B cell (primary cell): ENCODE measurements at regions of chr4 and their contacts with region 1.

Region 1: GRCh38 chr4:73308286-73308685 is 49.7 kb upstream of the ANKRD17 start:
- DNase-seq: peak; percentile 13
- ATAC-seq: no peak
- H3K4me3 ChIP-seq: no peak overlapping the region
- H3K4me3 Mint-ChIP-seq: no peak overlapping the region
- H3K27ac ChIP-seq: no peak overlapping the region
- H3K27ac Mint-ChIP-seq: no peak overlapping the region
- H3K4me1 ChIP-seq: no peaks in the 10 kb centered on the region
- H3K4me1 Mint-ChIP-seq: peaks cover 2% of the 10 kb centered on the region
- H3K27me3 ChIP-seq: no peaks in the 10 kb centered on the region
- H3K27me3 Mint-ChIP-seq: no peaks in the 10 kb centered on the region
- CTCF ChIP-seq: peak; percentile 44

Region 2: DNA sequence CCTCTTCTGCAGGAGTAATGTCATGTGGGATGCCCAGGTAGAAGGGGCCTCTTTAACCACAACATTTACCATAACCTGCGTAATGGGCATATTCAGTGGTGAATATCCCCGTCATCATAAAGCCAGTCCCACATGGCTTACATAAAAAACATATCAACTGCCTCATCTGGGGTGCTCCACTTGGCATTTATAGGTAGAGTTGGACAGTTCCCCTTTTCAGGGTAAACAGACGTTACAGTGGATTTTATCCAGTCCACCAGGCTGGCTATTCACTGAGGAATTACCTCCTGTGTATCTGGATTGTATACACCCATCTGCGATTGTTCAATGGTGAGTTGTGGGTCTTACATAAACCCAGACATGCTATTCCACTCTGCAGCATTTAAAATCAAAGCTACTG is 21.0 kb after region 1 on chr4:
- CTCF ChIA-PET with region 1: no interaction called
- POLR2A ChIA-PET with region 1: no interaction called
- intact Hi-C with region 1: no loop called
- DNase-seq: no peak
- ATAC-seq: no peak
- H3K4me3 ChIP-seq: no peak overlapping the region
- H3K4me3 Mint-ChIP-seq: no peak overlapping the region
- H3K27ac ChIP-seq: no peak overlapping the region
- H3K27ac Mint-ChIP-seq: no peak overlapping the region
- H3K4me1 ChIP-seq: no peaks in the 10 kb centered on the region
- H3K4me1 Mint-ChIP-seq: no peaks in the 10 kb centered on the region
- H3K27me3 ChIP-seq: no peaks in the 10 kb centered on the region
- H3K27me3 Mint-ChIP-seq: peaks cover 16% of the 10 kb centered on the region
- CTCF ChIP-seq: no peak

Region 3: DNA sequence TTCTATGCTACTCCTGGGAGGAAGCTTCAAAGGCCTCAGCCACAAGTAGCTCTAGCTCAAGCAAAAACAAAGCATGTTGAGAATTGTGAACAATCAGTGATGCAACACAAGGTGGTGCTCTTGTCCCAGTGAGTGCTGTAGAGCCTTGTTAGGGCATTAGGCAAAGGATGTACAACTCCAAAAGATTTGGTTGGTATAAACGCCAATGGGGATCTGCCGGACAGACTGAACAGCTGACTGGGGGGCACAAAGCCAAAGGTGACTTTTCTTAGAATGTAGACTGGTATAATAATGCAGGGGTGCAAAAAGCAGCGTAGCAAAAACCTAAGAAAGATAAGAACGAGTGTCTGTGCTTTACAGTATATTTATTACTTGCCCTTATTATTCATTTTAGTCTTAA is 33.2 kb after region 1 on chr4:
- CTCF ChIA-PET with region 1: no interaction called
- POLR2A ChIA-PET with region 1: no interaction called
- intact Hi-C with region 1: no loop called
- DNase-seq: peak; percentile 3
- ATAC-seq: no peak
- H3K4me3 ChIP-seq: no peak overlapping the region
- H3K4me3 Mint-ChIP-seq: no peak overlapping the region
- H3K27ac ChIP-seq: no peak overlapping the region
- H3K27ac Mint-ChIP-seq: no peak overlapping the region
- H3K4me1 ChIP-seq: no peaks in the 10 kb centered on the region
- H3K4me1 Mint-ChIP-seq: no peaks in the 10 kb centered on the region
- H3K27me3 ChIP-seq: no peaks in the 10 kb centered on the region
- H3K27me3 Mint-ChIP-seq: peaks cover 10% of the 10 kb centered on the region
- CTCF ChIP-seq: no peak

Region 4: DNA sequence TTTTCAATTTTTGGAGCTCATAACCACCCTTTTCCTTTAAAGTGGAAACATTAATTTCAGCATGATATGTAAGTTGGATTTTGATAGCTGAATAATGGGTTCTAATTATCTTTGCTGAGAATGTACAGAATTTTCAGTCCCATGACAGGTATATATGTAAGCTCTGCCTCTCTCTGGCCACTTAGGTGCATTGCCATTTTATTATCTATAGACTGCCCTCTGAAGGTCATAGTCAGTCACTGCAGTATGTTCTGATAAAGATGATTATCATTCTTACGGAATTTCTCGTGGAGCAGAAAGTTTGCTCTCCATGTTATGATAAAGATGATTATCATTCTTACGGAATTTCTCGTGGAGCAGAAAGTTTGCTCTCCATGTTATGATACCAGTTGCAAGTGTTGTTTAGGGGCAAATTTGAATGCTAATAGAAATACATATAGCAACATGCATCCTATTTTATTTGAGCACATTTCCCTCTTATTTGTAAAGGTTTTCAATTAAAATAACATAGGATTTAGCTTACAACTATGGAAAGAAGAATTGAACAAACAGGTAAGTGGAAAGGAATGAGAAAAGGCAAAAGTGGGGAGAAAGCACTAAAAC is 138.2 kb after region 1 on chr4:
- CTCF ChIA-PET with region 1: interaction called, 3 read pairs
- POLR2A ChIA-PET with region 1: no interaction called
- intact Hi-C with region 1: loop called (anchors 1 kb)
- DNase-seq: peak; percentile 41
- ATAC-seq: peak; percentile 83
- H3K4me3 ChIP-seq: no peak overlapping the region
- H3K4me3 Mint-ChIP-seq: no peak overlapping the region
- H3K27ac ChIP-seq: no peak overlapping the region
- H3K27ac Mint-ChIP-seq: no peak overlapping the region
- H3K4me1 ChIP-seq: no peaks in the 10 kb centered on the region
- H3K4me1 Mint-ChIP-seq: no peaks in the 10 kb centered on the region
- H3K27me3 ChIP-seq: peaks cover 0 to 4% (median 0%) of the 10 kb centered on the region in 4 experiments
- H3K27me3 Mint-ChIP-seq: peaks cover 25% of the 10 kb centered on the region
- CTCF ChIP-seq: peak; percentile 82

Region 5: DNA sequence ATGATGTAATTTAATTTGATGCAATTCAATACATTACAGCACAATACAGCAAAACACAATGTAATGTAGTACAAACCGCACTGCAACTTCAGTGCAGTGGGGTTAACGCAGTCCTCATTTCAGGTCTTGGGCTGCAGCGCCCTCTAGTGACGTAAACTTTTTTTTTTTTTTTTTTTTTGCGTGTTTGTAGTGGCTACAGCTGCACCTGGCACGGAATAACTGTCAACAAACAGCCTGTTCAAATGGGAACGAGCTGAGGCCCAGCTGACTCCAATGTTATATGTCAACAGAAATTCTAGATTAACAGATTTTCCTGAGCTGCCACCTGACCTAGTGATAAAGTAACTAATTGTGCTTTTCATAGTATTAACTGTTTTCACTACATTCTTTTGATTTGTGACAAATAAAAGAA is 345.4 kb after region 1 on chr4:
- CTCF ChIA-PET with region 1: interaction called, 5 read pairs
- POLR2A ChIA-PET with region 1: no interaction called
- intact Hi-C with region 1: loop called (anchors 1 kb)
- DNase-seq: peak; percentile 69
- ATAC-seq: peak; percentile 75
- H3K4me3 ChIP-seq: no peak overlapping the region
- H3K4me3 Mint-ChIP-seq: no peak overlapping the region
- H3K27ac ChIP-seq: no peak overlapping the region
- H3K27ac Mint-ChIP-seq: no peak overlapping the region
- H3K4me1 ChIP-seq: no peaks in the 10 kb centered on the region
- H3K4me1 Mint-ChIP-seq: peaks cover 2% of the 10 kb centered on the region
- H3K27me3 ChIP-seq: no peaks in the 10 kb centered on the region
- H3K27me3 Mint-ChIP-seq: no peaks in the 10 kb centered on the region
- CTCF ChIP-seq: peak; percentile 81

Region 6: GRCh38 chr4:73674451-73674919 is 366.2 kb after region 1 on chr4:
- CTCF ChIA-PET with region 1: interaction called, 3 read pairs
- POLR2A ChIA-PET with region 1: no interaction called
- intact Hi-C with region 1: loop called (anchors 5 kb)
- DNase-seq: no peak
- ATAC-seq: no peak
- H3K4me3 ChIP-seq: no peak overlapping the region
- H3K4me3 Mint-ChIP-seq: no peak overlapping the region
- H3K27ac ChIP-seq: no peak overlapping the region
- H3K27ac Mint-ChIP-seq: no peak overlapping the region
- H3K4me1 ChIP-seq: no peaks in the 10 kb centered on the region
- H3K4me1 Mint-ChIP-seq: peaks cover 6% of the 10 kb centered on the region
- H3K27me3 ChIP-seq: no peaks in the 10 kb centered on the region
- H3K27me3 Mint-ChIP-seq: peaks cover 6% of the 10 kb centered on the region
- CTCF ChIP-seq: no peak